Naive thymus-derived CD4-positive, alpha-beta T cell (primary cell): ENCODE measurements at regions of chr11 and their contacts with region 1.

Region 1: DNA sequence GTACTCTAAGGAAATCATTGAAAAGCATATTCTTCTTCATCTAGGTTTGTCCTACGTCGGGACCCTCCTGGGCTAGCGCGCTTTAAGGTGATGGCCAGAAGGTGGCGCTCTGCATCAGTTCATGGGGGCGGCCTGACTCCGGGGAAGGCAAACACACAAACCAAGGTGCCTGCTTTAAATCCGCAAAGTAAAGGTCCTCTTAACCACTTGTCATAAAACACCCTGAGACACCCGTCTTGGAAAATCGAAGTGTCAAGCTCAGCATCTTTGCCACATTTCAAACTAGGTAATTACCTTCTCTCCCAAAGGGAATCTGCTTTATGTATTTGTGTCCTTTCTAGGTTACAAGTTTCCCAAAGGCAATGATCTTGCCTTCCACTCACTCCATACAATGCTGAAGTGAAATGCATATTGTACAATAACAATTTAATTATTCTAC is 33.9 kb downstream of the LMO2 start:
- DNase-seq: peak; percentile 41 to 75 (median 63)
- ATAC-seq: peak; percentile 96
- H3K4me3 ChIP-seq: no peak overlapping the region
- H3K4me3 Mint-ChIP-seq: no peak overlapping the region
- H3K27ac ChIP-seq: no peak overlapping the region
- H3K27ac Mint-ChIP-seq: no peak overlapping the region
- H3K4me1 ChIP-seq: no peaks in the 10 kb centered on the region
- H3K4me1 Mint-ChIP-seq: peaks cover 0 to 2% (median 0%) of the 10 kb centered on the region in 7 donors
- H3K27me3 ChIP-seq: no peaks in the 10 kb centered on the region
- H3K27me3 Mint-ChIP-seq: peaks cover 25 to 74% (median 50%) of the 10 kb centered on the region in 5 donors

Region 2: GRCh38 chr11:33829433-33830141 is 28.4 kb before region 1 on chr11:
- CTCF ChIA-PET with region 1: no interaction called
- POLR2A ChIA-PET with region 1: no interaction called
- intact Hi-C with region 1: no loop called
- DNase-seq: peak; percentile 20 to 61 (median 54)
- ATAC-seq: peak; percentile 89
- H3K4me3 ChIP-seq: no peak overlapping the region
- H3K4me3 Mint-ChIP-seq: peak overlapping the region; percentile 74 to 92 (median 82)
- H3K27ac ChIP-seq: no peak overlapping the region
- H3K27ac Mint-ChIP-seq: no peak overlapping the region
- H3K4me1 ChIP-seq: peaks cover 4% of the 10 kb centered on the region in 2 donors
- H3K4me1 Mint-ChIP-seq: peaks cover 2 to 7% (median 6%) of the 10 kb centered on the region in 7 donors
- H3K27me3 ChIP-seq: peaks cover 0 to 10% of the 10 kb centered on the region in 2 donors
- H3K27me3 Mint-ChIP-seq: peaks cover 45 to 68% (median 66%) of the 10 kb centered on the region in 5 donors

Region 3: DNA sequence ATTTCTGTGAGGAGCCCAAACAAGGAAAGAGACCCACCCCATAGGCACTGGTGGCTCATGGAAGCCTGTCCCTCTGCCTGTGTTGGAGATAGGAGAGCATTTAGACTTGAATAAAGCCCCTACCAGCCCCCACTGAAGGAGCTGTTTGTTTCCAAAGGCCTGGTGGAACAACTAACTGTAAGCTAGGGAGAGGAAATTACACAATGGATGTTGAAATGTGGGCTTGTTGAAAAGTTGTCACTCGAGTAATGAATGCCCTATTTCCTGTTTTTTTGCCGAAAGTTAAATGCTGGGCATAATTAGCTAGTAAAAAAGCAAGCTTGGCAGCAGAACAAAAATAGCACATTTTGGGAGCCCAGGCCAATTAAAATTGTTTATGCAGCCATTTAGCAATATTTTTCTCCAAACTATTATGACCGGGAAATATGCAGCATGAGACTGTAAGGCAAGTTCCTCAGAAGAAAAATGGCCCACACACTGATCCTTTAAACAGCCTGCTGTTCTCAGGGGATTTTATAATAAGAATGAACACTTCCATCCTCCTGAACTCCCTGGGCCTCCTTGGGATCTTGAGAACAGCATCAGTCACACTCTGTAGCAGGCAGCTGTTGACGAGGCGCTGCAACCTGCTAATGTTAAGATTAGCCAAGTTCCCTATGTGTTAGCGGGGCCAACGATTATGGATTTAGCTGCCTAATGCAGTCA is 72.5 kb after region 1 on chr11:
- CTCF ChIA-PET with region 1: no interaction called
- POLR2A ChIA-PET with region 1: no interaction called
- intact Hi-C with region 1: no loop called
- DNase-seq: no peak
- ATAC-seq: peak; percentile 62
- H3K4me3 ChIP-seq: no peak overlapping the region
- H3K4me3 Mint-ChIP-seq: no peak overlapping the region
- H3K27ac ChIP-seq: no peak overlapping the region
- H3K27ac Mint-ChIP-seq: no peak overlapping the region
- H3K4me1 ChIP-seq: no peaks in the 10 kb centered on the region
- H3K4me1 Mint-ChIP-seq: peaks cover 0 to 10% (median 4%) of the 10 kb centered on the region in 7 donors
- H3K27me3 ChIP-seq: no peaks in the 10 kb centered on the region
- H3K27me3 Mint-ChIP-seq: peaks cover 0 to 7% (median 3%) of the 10 kb centered on the region in 5 donors

Region 4: DNA sequence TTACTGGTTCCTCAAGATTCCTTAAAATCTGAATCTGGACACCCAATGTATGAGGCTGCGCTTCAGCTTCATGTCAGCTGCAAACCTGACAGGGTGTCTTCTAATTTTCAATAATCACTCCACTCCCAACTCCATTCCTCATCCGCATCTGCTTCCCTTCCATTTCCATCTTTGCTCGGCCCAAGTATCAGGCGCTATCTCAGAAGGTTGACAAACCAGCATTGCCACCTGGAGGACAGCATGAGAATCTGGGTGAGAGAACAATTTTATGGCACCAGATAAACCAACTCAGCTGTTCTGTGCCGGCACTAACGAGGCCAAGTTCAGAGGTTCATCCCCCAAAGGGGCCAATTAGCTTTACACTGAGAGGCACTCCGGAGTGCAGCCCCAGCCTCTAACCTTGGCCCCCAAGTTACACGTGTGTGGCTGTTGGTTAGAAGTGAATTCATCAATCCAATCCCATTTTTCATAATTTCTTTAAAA is 113.1 kb after region 1 on chr11:
- CTCF ChIA-PET with region 1: no interaction called
- POLR2A ChIA-PET with region 1: no interaction called
- intact Hi-C with region 1: loop called in 1 of 2 experiments (anchors 1 kb)
- DNase-seq: peak in 3 of 9 donors; percentile 8 to 23 (median 22)
- ATAC-seq: peak; percentile 72
- H3K4me3 ChIP-seq: no peak overlapping the region
- H3K4me3 Mint-ChIP-seq: no peak overlapping the region
- H3K27ac ChIP-seq: no peak overlapping the region
- H3K27ac Mint-ChIP-seq: no peak overlapping the region
- H3K4me1 ChIP-seq: no peaks in the 10 kb centered on the region
- H3K4me1 Mint-ChIP-seq: peaks cover 0 to 1% (median 0%) of the 10 kb centered on the region in 7 donors
- H3K27me3 ChIP-seq: no peaks in the 10 kb centered on the region
- H3K27me3 Mint-ChIP-seq: peaks cover 9 to 19% (median 12%) of the 10 kb centered on the region in 5 donors

Region 5: DNA sequence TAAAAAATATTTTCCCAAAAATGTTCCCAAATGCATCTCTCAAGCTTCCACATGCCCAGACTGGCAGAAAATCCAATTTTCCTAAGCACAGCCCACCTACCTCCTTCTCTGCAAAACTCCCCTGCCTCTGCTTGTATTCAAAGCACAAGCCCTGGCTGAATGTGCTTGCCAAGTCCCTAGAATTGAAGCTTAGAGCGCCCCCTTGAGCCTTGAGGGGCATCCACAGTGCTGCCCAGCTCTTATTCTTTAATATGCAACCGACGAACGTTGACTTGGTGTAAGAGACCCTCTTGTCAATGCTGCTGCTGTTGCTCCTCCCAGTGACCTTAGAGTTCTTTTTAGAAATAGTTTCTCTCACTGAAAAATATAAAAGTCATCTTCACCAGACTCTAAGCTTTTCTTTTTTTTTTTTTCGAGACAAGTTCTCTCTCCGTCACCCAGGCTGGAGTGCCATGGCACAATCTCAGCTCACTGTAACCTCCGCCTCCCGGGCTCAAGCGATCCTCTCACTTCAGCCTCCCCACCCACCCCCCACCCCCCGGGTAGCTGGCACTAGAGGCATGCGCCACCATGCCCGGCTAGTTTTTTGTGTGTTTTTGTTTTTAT is 130.1 kb after region 1 on chr11:
- CTCF ChIA-PET with region 1: interaction called, 8 read pairs
- POLR2A ChIA-PET with region 1: no interaction called
- intact Hi-C with region 1: loop called (anchors 1 kb)
- DNase-seq: peak; percentile 41 to 78 (median 64)
- ATAC-seq: peak; percentile 88
- H3K4me3 ChIP-seq: no peak overlapping the region
- H3K4me3 Mint-ChIP-seq: no peak overlapping the region
- H3K27ac ChIP-seq: no peak overlapping the region
- H3K27ac Mint-ChIP-seq: no peak overlapping the region
- H3K4me1 ChIP-seq: no peaks in the 10 kb centered on the region
- H3K4me1 Mint-ChIP-seq: peaks cover 0 to 11% (median 9%) of the 10 kb centered on the region in 7 donors
- H3K27me3 ChIP-seq: no peaks in the 10 kb centered on the region
- H3K27me3 Mint-ChIP-seq: peaks cover 0 to 5% (median 2%) of the 10 kb centered on the region in 5 donors